MCF 10A (cell line): ENCODE measurements at regions of chr11 and their contacts with region 1.

Region 1: GRCh38 chr11:133134314-133135173 is 397.8 kb downstream of the OPCML start:
- DNase-seq: peak; percentile 0
- H3K4me3 Mint-ChIP-seq: no peak overlapping the region
- H3K27ac Mint-ChIP-seq: no peak overlapping the region
- H3K4me1 Mint-ChIP-seq: no peaks in the 10 kb centered on the region
- H3K27me3 Mint-ChIP-seq: no peaks in the 10 kb centered on the region
- CTCF ChIP-seq: peak; percentile 57

Region 2: GRCh38 chr11:133078591-133079404 is 55.7 kb before region 1 on chr11:
- CTCF ChIA-PET with region 1: interaction called, 12 read pairs
- POLR2A ChIA-PET with region 1: no interaction called
- intact Hi-C with region 1: no loop called
- DNase-seq: no peak
- H3K4me3 Mint-ChIP-seq: no peak overlapping the region
- H3K27ac Mint-ChIP-seq: no peak overlapping the region
- H3K4me1 Mint-ChIP-seq: no peaks in the 10 kb centered on the region
- H3K27me3 Mint-ChIP-seq: no peaks in the 10 kb centered on the region
- CTCF ChIP-seq: peak; percentile 63

Region 3: DNA sequence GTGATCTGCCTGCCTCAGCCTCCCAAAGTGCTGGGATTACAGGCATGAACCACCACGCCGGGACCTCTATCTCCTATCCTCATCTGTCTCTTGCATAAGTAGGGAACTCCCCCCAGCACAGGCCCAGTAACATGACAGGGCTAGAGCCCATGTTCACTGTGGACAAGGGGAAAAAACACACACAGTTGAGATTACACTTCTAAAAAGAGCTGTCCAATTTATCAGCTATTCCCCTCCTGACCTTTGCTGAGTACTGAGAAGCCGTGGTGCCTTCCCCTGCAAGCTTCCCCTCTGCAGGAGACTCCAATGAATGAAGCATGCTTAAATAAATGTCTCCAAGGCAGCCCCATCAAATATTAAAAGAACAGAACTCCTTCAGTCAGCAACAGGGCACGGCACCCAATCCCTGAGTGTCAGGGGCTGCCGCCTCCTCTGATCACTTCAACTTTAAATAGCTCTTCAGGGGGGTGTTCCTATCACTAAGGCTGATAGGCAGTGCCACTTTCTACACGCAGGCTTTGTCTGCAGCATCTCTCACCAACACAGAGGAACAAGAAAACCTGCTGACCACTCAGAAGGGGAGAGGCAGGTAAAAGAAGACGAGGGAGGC is 12.3 kb after region 1 on chr11:
- CTCF ChIA-PET with region 1: interaction called, 48 read pairs
- POLR2A ChIA-PET with region 1: no interaction called
- intact Hi-C with region 1: no loop called
- DNase-seq: no peak
- H3K4me3 Mint-ChIP-seq: no peak overlapping the region
- H3K27ac Mint-ChIP-seq: no peak overlapping the region
- H3K4me1 Mint-ChIP-seq: no peaks in the 10 kb centered on the region
- H3K27me3 Mint-ChIP-seq: peaks cover 15% of the 10 kb centered on the region
- CTCF ChIP-seq: no peak

Region 4: GRCh38 chr11:133243832-133244231 is 109.3 kb after region 1 on chr11:
- CTCF ChIA-PET with region 1: no interaction called
- POLR2A ChIA-PET with region 1: no interaction called
- intact Hi-C with region 1: no loop called
- DNase-seq: no peak
- H3K4me3 Mint-ChIP-seq: no peak overlapping the region
- H3K27ac Mint-ChIP-seq: no peak overlapping the region
- H3K4me1 Mint-ChIP-seq: no peaks in the 10 kb centered on the region
- H3K27me3 Mint-ChIP-seq: peaks cover 11% of the 10 kb centered on the region
- CTCF ChIP-seq: no peak

Region 5: DNA sequence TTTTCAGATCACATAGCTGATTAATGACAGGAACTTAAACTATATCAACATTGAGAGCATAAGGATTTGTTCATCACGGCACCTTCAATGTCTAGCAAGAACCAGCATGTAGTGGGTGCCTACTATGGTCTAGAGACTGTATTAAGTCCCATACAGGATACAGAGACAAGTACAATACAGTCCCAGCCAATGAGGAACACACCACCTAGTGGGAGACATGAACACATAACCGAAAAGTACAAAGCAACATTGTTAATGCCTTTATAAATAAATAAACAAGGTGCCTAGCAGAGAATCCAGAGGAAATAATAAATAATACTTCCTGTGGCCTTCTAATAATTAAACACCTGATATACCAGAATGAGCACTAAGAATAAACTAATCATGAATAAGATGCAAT is 485.4 kb after region 1 on chr11:
- CTCF ChIA-PET with region 1: interaction called, 15 read pairs
- POLR2A ChIA-PET with region 1: no interaction called
- intact Hi-C with region 1: loop called (anchors 2 kb)
- DNase-seq: no peak
- H3K4me3 Mint-ChIP-seq: no peak overlapping the region
- H3K27ac Mint-ChIP-seq: no peak overlapping the region
- H3K4me1 Mint-ChIP-seq: no peaks in the 10 kb centered on the region
- H3K27me3 Mint-ChIP-seq: no peaks in the 10 kb centered on the region
- CTCF ChIP-seq: peak; percentile 18

Region 6: GRCh38 chr11:133834682-133835592 is 700.4 kb after region 1 on chr11:
- CTCF ChIA-PET with region 1: interaction called, 54 read pairs
- POLR2A ChIA-PET with region 1: interaction called, 4 read pairs
- intact Hi-C with region 1: loop called (anchors 1 kb)
- DNase-seq: peak; percentile 70
- H3K4me3 Mint-ChIP-seq: no peak overlapping the region
- H3K27ac Mint-ChIP-seq: no peak overlapping the region
- H3K4me1 Mint-ChIP-seq: no peaks in the 10 kb centered on the region
- H3K27me3 Mint-ChIP-seq: no peaks in the 10 kb centered on the region
- CTCF ChIP-seq: peak; percentile 69